ENCODE measurements at regions of chr12 and their contacts with region 1.

Region 1: GRCh38 chr12:14884458-14884878 is 1.2 kb downstream of the MGP start:
- DNase-seq: peak in 9 of 10 donors; percentile 47 to 90 (median 62)

Region 2: GRCh38 chr12:14952299-14952921 is 67.9 kb after region 1 on chr12:
- intact Hi-C with region 1: loop called (anchors 10 kb)
- DNase-seq: no peak